Natural killer cell (primary cell): ENCODE measurements at regions of chr7 and their contacts with region 1.

Region 1: GRCh38 chr7:2019607-2020511 is 212.9 kb downstream of the MAD1L1 start:
- DNase-seq: peak; percentile 66
- ATAC-seq: peak; percentile 86 to 90 (median 88)
- H3K4me3 ChIP-seq: peak overlapping the region; percentile 11
- H3K4me3 Mint-ChIP-seq: peak overlapping the region; percentile 89
- H3K27ac ChIP-seq: peak overlapping the region; percentile 80
- H3K27ac Mint-ChIP-seq: peak overlapping the region; percentile 82 to 92
- H3K4me1 ChIP-seq: peaks cover 34% of the 10 kb centered on the region
- H3K4me1 Mint-ChIP-seq: peaks cover 30 to 50% of the 10 kb centered on the region in 2 donors
- H3K27me3 ChIP-seq: no peaks in the 10 kb centered on the region
- H3K27me3 Mint-ChIP-seq: peaks cover 2 to 6% of the 10 kb centered on the region in 2 donors
- CTCF ChIP-seq: no peak

Region 2: DNA sequence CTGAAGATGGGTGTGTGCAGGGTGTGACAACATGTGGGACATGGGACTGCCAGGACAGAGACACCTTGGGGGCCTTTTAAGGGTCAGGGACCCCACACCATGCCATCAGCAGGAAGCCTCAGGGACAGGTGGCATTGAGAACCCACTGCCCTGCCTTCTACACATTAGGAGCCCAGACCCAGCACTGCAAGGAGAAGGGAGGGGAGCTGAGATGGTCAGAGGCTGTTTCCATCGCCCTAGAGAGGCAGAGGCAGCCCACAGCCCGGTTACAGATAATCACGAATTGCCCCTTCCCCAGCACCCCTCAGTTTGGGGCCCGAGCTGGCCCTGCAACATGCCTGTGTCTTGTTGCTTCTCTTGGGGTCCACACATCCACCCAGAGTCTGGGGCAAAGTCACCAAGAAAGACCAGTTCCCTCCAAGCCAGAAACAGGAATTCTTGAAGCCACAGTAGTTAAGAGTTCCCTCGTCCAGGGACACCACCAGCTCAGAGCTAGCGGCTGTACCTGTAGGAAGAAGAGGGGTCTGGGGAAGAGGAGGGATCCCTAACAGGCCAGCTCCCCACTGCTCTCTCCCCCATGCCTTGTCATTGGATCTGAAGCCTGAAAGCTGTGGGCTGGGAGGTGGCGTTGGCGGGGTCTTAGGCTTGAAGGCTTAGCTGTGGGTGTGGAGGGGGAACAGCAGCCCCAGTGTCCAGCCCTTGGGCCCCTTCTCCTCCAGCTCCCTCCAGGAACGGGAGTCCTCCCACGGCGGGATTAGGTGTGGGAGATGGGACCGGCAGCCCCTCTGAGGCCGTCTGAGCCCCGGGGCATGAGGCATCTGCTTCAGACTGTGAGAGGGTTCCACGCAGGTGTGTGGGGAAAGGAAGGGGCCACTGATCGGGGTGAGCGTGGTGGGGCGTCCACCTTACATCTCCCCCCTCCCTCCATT is 394.6 kb before region 1 on chr7:
- intact Hi-C with region 1: no loop called
- DNase-seq: no peak
- ATAC-seq: peak in 1 of 3 donors; percentile 32
- H3K4me3 ChIP-seq: no peak overlapping the region
- H3K4me3 Mint-ChIP-seq: no peak overlapping the region
- H3K27ac ChIP-seq: no peak overlapping the region
- H3K27ac Mint-ChIP-seq: no peak overlapping the region
- H3K4me1 ChIP-seq: no peaks in the 10 kb centered on the region
- H3K4me1 Mint-ChIP-seq: no peaks in the 10 kb centered on the region
- H3K27me3 ChIP-seq: no peaks in the 10 kb centered on the region
- H3K27me3 Mint-ChIP-seq: peaks cover under 1 to 10% of the 10 kb centered on the region in 2 donors
- CTCF ChIP-seq: no peak

Region 3: GRCh38 chr7:1857487-1858421 is 162.1 kb before region 1 on chr7:
- intact Hi-C with region 1: no loop called
- DNase-seq: no peak
- ATAC-seq: no peak
- H3K4me3 ChIP-seq: no peak overlapping the region
- H3K4me3 Mint-ChIP-seq: no peak overlapping the region
- H3K27ac ChIP-seq: no peak overlapping the region
- H3K27ac Mint-ChIP-seq: no peak overlapping the region
- H3K4me1 ChIP-seq: peaks cover 29% of the 10 kb centered on the region
- H3K4me1 Mint-ChIP-seq: peaks cover 19 to 34% of the 10 kb centered on the region in 2 donors
- H3K27me3 ChIP-seq: no peaks in the 10 kb centered on the region
- H3K27me3 Mint-ChIP-seq: no peaks in the 10 kb centered on the region
- CTCF ChIP-seq: no peak

Region 4: GRCh38 chr7:1961701-1962276 is 58.1 kb before region 1 on chr7:
- intact Hi-C with region 1: no loop called
- DNase-seq: peak; percentile 67 to 81
- ATAC-seq: peak; percentile 66 to 87 (median 78)
- H3K4me3 ChIP-seq: no peak overlapping the region
- H3K4me3 Mint-ChIP-seq: peak overlapping the region; percentile 41
- H3K27ac ChIP-seq: peak overlapping the region; percentile 8
- H3K27ac Mint-ChIP-seq: peak overlapping the region; percentile 93 to 96
- H3K4me1 ChIP-seq: no peaks in the 10 kb centered on the region
- H3K4me1 Mint-ChIP-seq: peaks cover 34 to 36% of the 10 kb centered on the region in 2 donors
- H3K27me3 ChIP-seq: no peaks in the 10 kb centered on the region
- H3K27me3 Mint-ChIP-seq: peaks cover 24 to 26% of the 10 kb centered on the region in 2 donors
- CTCF ChIP-seq: no peak

Region 5: DNA sequence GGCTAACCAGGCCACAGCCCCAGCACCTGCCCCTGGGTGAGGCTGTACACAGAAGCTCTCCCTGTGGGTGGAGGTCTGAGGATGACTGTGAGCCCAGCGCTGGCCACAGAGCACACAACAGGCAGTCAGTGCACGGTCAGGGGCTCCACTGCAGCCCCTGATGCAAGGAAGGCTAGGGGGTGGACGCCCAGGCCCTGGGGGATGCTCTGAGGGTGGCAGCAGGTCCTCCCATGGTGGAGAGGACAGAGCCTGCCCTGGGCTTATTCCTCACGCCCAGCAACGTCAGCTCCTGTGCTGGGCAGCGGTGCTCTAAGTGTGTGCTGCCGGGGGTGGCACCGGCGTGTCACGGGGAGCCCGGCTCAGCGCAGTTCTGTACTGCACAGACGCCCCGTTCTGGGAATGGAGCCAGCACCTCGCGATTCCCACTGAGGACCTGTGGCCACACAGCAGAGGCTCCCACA is 10.3 kb before region 1 on chr7:
- intact Hi-C with region 1: no loop called
- DNase-seq: no peak
- ATAC-seq: no peak
- H3K4me3 ChIP-seq: no peak overlapping the region
- H3K4me3 Mint-ChIP-seq: no peak overlapping the region
- H3K27ac ChIP-seq: no peak overlapping the region
- H3K27ac Mint-ChIP-seq: no peak overlapping the region
- H3K4me1 ChIP-seq: peaks cover 23% of the 10 kb centered on the region
- H3K4me1 Mint-ChIP-seq: peaks cover 27 to 31% of the 10 kb centered on the region in 2 donors
- H3K27me3 ChIP-seq: no peaks in the 10 kb centered on the region
- H3K27me3 Mint-ChIP-seq: peaks cover 7 to 10% of the 10 kb centered on the region in 2 donors
- CTCF ChIP-seq: no peak

Region 6: GRCh38 chr7:2030475-2031450 is 10.9 kb after region 1 on chr7:
- intact Hi-C with region 1: loop called (anchors 1 kb)
- DNase-seq: peak; percentile 67 to 69
- ATAC-seq: peak; percentile 93 to 100 (median 99)
- H3K4me3 ChIP-seq: no peak overlapping the region
- H3K4me3 Mint-ChIP-seq: peak overlapping the region; percentile 90
- H3K27ac ChIP-seq: no peak overlapping the region
- H3K27ac Mint-ChIP-seq: peak overlapping the region; percentile 64 to 85
- H3K4me1 ChIP-seq: peaks cover 25% of the 10 kb centered on the region
- H3K4me1 Mint-ChIP-seq: peaks cover 40 to 47% of the 10 kb centered on the region in 2 donors
- H3K27me3 ChIP-seq: no peaks in the 10 kb centered on the region
- H3K27me3 Mint-ChIP-seq: peaks cover 16 to 42% of the 10 kb centered on the region in 2 donors
- CTCF ChIP-seq: no peak